ENCODE measurements at regions of chr12 and their contacts with region 1.

Region 1: DNA sequence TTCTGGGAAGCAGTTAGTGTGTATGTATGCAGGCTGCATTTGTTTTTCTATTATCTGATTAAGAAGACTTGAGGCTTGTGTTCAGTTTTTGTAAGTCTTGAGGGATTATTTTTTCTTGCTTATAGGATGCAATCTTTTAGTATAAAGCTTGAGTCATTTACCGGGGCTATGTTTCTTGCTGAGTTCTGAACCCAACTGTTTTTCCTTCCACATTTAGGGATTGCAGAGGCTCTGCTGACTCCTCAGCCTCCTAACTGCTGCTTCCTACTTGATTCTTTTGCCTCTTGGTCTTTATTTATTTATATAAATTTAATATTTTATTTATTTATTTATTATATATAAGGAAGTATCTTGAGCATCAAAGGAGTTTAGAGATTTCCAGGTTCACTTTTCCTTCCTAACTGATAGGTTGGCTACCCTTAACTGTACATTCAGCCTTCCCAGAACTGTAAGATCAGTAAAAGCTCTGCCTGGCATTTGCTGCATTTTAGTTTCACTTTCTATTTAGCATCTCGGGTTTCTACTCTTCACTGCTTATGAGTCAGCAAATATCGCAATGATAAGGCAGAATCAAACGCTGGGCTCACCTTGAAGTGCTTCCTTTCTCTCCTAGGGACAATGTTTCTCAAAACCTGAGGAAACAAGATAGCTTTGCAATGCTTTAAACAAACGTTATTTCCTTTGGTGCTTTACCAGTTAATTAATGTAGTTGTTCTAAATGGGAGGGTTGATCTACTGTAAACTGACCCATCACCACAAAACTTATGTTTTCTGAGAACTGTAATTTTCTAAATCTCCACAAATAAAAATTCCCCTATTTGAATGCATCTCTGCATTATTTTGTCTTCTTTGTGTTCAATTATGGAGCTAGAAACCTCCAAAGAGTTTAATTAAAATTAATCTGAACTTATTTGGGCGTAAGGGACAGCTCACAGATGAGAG is 1183.7 kb upstream of the TMEM132C start:
- DNase-seq: peak; percentile 17
- H3K4me3 Mint-ChIP-seq: peak overlapping the region; percentile 56
- H3K27ac Mint-ChIP-seq: peak overlapping the region; percentile 26
- H3K4me1 Mint-ChIP-seq: peaks cover 14% of the 10 kb centered on the region
- H3K27me3 Mint-ChIP-seq: peaks cover 2% of the 10 kb centered on the region

Region 2: GRCh38 chr12:126233625-126234024 is 849.7 kb before region 1 on chr12:
- intact Hi-C with region 1: no loop called
- DNase-seq: no peak
- H3K4me3 Mint-ChIP-seq: no peak overlapping the region
- H3K27ac Mint-ChIP-seq: no peak overlapping the region
- H3K4me1 Mint-ChIP-seq: no peaks in the 10 kb centered on the region
- H3K27me3 Mint-ChIP-seq: no peaks in the 10 kb centered on the region

Region 3: GRCh38 chr12:126772171-126772864 is 311.0 kb before region 1 on chr12:
- intact Hi-C with region 1: loop called (anchors 1 kb)
- DNase-seq: peak; percentile 20
- H3K4me3 Mint-ChIP-seq: peak overlapping the region; percentile 85
- H3K27ac Mint-ChIP-seq: peak overlapping the region; percentile 97
- H3K4me1 Mint-ChIP-seq: peaks cover 15% of the 10 kb centered on the region
- H3K27me3 Mint-ChIP-seq: no peaks in the 10 kb centered on the region

Region 4: DNA sequence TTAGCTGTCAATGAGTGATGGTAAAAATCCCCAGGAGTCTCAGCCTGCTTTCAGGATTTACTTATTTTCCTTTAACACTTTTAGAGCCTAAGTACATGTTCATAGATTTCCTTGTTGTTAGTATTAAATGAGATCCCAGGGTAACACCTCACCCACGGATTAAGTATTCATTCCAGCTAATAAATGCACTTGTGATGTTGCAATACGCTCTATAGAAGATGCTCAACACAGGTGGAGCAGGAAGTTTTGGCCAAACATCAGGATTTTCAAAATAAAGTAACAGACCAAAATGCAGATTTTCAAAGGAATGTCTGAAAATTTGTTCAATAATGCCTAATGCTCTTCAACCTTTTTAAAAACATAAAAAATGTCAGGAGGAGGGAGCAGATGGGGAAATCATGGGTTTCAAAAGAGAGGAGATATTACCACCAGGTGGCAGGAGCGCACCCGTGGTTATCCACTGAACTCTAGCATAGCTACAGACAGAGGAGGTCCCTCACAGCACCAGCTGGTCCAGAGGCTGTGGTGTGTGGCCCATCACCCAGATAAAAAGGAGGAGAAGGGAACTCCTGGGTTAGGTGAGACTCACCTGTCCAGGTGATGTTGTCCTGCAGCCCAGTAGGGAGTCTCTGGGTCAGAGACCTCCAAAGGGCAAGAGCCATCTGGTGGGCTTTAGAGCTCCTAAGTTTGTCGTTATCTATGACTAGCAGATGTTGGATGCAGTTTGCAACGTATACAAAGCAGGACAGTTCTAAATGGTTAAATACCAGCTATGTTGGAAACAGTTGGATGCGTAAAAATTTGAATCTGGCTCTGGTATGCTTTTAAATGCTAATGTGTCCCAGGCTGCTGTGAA is 25.3 kb after region 1 on chr12:
- intact Hi-C with region 1: loop called (anchors 2 kb)
- DNase-seq: peak; percentile 16
- H3K4me3 Mint-ChIP-seq: no peak overlapping the region
- H3K27ac Mint-ChIP-seq: no peak overlapping the region
- H3K4me1 Mint-ChIP-seq: peaks cover 6% of the 10 kb centered on the region
- H3K27me3 Mint-ChIP-seq: peaks cover 6% of the 10 kb centered on the region

Region 5: GRCh38 chr12:127125607-127126259 is 42.5 kb after region 1 on chr12:
- intact Hi-C with region 1: loop called (anchors 1 kb)
- DNase-seq: peak; percentile 57
- H3K4me3 Mint-ChIP-seq: no peak overlapping the region
- H3K27ac Mint-ChIP-seq: peak overlapping the region; percentile 80
- H3K4me1 Mint-ChIP-seq: peaks cover 18% of the 10 kb centered on the region
- H3K27me3 Mint-ChIP-seq: no peaks in the 10 kb centered on the region

Region 6: DNA sequence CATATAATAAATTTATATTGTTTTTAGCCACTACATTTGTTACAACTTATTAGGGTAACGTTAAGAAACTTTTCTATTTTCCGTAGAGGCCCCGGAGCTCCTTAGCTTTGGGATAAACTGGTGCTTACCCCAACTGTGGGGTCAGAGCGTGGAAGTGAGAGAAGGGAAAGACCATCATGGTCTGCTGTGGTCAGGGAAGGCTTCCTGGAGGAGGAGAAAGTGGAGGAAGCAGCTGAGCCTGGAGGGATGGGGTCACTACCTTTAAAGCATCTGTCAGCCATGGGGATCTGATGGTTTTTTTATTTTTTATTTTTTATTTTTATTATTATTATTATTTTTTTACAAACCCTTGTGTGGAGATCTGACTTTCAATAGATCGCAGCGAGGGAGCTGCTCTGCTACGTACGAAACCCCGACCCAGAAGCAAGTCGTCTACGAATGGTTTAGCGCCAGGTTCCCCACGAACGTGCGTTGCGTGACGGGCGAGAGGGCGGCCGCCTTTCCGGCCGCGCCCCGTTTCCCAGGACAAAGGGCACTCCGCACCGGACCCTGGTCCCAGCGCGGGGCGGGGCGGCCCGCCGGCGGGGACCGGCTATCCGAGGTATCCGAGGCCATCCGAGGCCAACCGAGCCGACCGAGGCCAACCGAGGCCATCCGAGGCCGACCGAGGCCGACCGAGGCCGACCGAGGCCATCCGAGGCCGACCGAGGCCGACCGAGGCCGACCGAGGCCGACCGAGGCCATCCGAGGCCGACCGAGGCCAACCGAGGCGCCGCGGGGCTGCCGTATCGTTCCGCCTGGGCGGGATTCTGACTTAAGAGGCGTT is 82.5 kb after region 1 on chr12:
- intact Hi-C with region 1: loop called (anchors 5 kb)
- DNase-seq: peak; percentile 77
- H3K4me3 Mint-ChIP-seq: peak overlapping the region; percentile 81
- H3K27ac Mint-ChIP-seq: peak overlapping the region; percentile 53
- H3K4me1 Mint-ChIP-seq: peaks cover 26% of the 10 kb centered on the region
- H3K27me3 Mint-ChIP-seq: peaks cover 15% of the 10 kb centered on the region

Region 7: DNA sequence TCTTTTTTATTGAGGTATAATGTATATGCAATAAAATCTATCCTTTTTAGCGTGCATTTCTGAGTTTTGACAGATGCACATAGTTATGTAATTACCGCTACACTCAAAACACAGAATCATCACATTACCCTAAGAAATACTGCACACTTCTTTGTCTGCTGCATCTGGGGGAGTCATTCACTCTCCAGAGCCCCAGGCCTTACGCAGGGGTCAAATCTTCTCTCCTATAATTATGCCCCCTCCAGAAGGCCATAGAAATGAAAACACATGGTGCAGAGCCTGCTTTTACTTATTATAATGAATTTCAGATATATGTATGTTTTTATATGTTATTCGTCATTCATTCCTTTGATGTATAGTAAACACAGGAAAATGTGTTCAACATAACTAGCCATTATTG is 887.2 kb after region 1 on chr12:
- intact Hi-C with region 1: no loop called
- DNase-seq: no peak
- H3K4me3 Mint-ChIP-seq: no peak overlapping the region
- H3K27ac Mint-ChIP-seq: no peak overlapping the region
- H3K4me1 Mint-ChIP-seq: no peaks in the 10 kb centered on the region
- H3K27me3 Mint-ChIP-seq: no peaks in the 10 kb centered on the region

Measured in activated T-helper 1 cell treated with anti-CD3 and anti-CD28 coated beads, Interleukin-12 subunit alpha, Interleukin-12 subunit beta, Interleukin-2, Interleukin-4 antibody, amounts not matched to agents 30 ng/mL and 10 ng/mL and 1 ng/mL, durations not matched to agents 14 hours and 24 hours and 36 hours (primary cell).